GM12878 (cell line): ENCODE measurements at regions of chr15 and their contacts with region 1.

Region 1: GRCh38 chr15:69237718-69238117 is 61.0 kb upstream of the PAQR5 start:
- DNase-seq: no peak
- ATAC-seq: no peak
- H3K4me3 ChIP-seq: no peak overlapping the region
- H3K27ac ChIP-seq: no peak overlapping the region
- H3K4me1 ChIP-seq: no peaks in the 10 kb centered on the region
- H3K27me3 ChIP-seq: no peaks in the 10 kb centered on the region
- CTCF ChIP-seq: no peak
- EP300 ChIP-seq: no peak
- POLR2A ChIP-seq: no peak
- RAD21 ChIP-seq: no peak

Region 2: DNA sequence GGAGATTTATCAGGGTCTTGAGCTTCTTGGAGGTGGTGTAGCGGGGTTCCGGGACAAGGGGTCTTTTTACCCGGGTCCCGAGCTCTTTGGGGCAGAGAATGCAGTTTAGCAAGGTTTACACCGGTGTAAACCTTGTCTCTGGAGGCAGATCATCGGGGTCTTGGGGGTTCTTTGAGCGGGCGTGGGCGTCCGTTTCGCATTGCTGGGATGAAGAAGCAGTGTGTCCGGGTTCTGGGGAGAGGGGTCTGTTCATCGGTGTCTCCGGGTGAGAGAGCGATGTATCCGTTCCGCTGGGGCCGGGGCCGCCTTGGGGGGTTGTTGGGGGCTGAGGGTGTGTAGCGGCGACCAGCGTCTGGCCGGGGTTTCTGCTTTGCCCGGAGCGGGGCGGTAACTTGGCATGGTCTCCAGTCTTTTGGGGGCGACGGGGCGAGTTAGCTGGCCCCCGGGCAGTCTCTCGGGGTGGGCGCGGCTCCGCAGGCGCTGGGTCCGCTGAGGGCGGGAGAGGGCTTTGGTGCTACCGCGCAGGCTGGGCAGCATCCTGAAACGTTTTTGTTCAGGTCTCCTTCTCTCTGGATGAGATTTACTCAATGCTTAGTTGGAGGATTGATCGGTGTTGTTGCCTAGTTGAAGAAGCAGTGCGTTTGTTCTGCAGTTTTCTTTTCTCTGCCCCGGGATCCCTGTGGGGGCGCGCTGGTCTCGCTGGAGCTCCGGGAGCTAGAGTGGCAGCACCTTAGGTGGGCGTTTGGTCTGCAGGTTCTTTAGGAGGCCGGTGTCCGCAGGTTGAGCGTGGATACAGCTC is 76.4 kb before region 1 on chr15:
- CTCF ChIA-PET with region 1: no interaction called
- POLR2A ChIA-PET with region 1: no interaction called
- RAD21 ChIA-PET with region 1: no interaction called
- SMC1A ChIA-PET with region 1: no interaction called
- in situ Hi-C with region 1: no loop called
- intact Hi-C with region 1: no loop called
- DNase-seq: no peak
- ATAC-seq: peak; percentile 23
- H3K4me3 ChIP-seq: peak overlapping the region; percentile 93
- H3K27ac ChIP-seq: no peak overlapping the region
- H3K4me1 ChIP-seq: 0 out of 2 replicates have a peak, but pooled peaks cover 4% of the 10 kb centered on the region
- H3K27me3 ChIP-seq: peaks cover 0 to 5% of the 10 kb centered on the region in 2 experiments; a peak in 2 of 4 replicates
- CTCF ChIP-seq: peak in 2 of 3 experiments; percentile 22 to 42; a peak in 3 of 6 replicates
- EP300 ChIP-seq: no peak
- POLR2A ChIP-seq: no peak
- RAD21 ChIP-seq: 0 out of 2 replicates have a peak, but pooled peaks have one; percentile 16

Region 3: GRCh38 chr15:69194025-69194827 is 43.5 kb before region 1 on chr15:
- CTCF ChIA-PET with region 1: no interaction called
- POLR2A ChIA-PET with region 1: no interaction called
- RAD21 ChIA-PET with region 1: no interaction called
- SMC1A ChIA-PET with region 1: no interaction called
- in situ Hi-C with region 1: no loop called
- intact Hi-C with region 1: loop called (anchors 2 kb)
- DNase-seq: no peak
- ATAC-seq: no peak
- H3K4me3 ChIP-seq: no peak overlapping the region
- H3K27ac ChIP-seq: no peak overlapping the region
- H3K4me1 ChIP-seq: no peaks in the 10 kb centered on the region
- H3K27me3 ChIP-seq: no peaks in the 10 kb centered on the region
- CTCF ChIP-seq: no peak
- EP300 ChIP-seq: no peak
- POLR2A ChIP-seq: no peak
- RAD21 ChIP-seq: no peak

Region 4: DNA sequence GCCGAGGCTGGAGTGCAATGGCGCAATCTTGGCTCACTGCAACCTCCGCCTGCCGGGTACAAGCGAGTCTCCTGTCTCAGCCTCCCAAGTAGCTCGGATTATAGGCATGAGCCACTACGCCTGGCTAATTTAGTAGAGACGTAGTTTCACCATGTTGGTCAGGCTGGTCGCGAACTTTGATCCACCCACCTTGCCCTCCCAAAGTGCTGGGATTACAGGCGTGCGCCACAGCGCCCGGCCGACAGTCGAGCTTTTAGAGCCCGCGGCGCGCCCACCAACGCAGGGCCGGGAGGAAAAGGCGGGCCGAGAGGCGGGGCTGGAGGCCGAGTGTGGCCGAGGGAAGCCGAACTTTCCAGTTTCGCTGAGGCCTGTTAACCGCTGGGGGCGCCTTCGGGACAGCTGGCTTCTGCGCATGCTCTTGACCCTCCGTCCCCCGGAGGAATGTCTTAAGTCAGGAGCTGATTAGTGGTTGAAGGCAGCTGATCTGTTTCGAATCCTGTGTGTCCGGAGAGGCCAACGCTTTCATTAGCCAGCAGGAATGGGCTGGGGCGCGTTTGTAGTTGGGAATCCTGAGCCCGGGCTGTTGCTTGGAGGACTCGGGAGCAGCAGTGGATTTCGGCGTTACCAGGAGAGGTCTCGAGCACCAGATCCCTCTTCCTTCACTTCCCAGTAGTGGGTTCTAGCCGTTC is 224.9 kb after region 1 on chr15:
- CTCF ChIA-PET with region 1: no interaction called
- POLR2A ChIA-PET with region 1: no interaction called
- RAD21 ChIA-PET with region 1: no interaction called
- SMC1A ChIA-PET with region 1: no interaction called
- in situ Hi-C with region 1: no loop called
- intact Hi-C with region 1: no loop called
- DNase-seq: peak; percentile 83
- ATAC-seq: peak; percentile 97
- H3K4me3 ChIP-seq: peak overlapping the region; percentile 80
- H3K27ac ChIP-seq: peak overlapping the region; percentile 76
- H3K4me1 ChIP-seq: peaks cover 6% of the 10 kb centered on the region
- H3K27me3 ChIP-seq: no peaks in the 10 kb centered on the region
- CTCF ChIP-seq: peak; percentile 85 to 95 (median 86)
- EP300 ChIP-seq: no peak
- POLR2A ChIP-seq: peak; percentile 69
- RAD21 ChIP-seq: no peak